HEK293 (cell line): ENCODE measurements at regions of chr16 and their contacts with region 1.

Region 1: GRCh38 chr16:67521095-67521804 is 7.4 kb upstream of the RIPOR1 start:
- H3K4me3 ChIP-seq: peak overlapping the region; percentile 38
- H3K27ac ChIP-seq: peak overlapping the region; percentile 5; the same call in 1 of the 2 replicates
- H3K4me1 ChIP-seq: no peaks in the 10 kb centered on the region
- CTCF ChIP-seq: peak; percentile 91

Region 2: DNA sequence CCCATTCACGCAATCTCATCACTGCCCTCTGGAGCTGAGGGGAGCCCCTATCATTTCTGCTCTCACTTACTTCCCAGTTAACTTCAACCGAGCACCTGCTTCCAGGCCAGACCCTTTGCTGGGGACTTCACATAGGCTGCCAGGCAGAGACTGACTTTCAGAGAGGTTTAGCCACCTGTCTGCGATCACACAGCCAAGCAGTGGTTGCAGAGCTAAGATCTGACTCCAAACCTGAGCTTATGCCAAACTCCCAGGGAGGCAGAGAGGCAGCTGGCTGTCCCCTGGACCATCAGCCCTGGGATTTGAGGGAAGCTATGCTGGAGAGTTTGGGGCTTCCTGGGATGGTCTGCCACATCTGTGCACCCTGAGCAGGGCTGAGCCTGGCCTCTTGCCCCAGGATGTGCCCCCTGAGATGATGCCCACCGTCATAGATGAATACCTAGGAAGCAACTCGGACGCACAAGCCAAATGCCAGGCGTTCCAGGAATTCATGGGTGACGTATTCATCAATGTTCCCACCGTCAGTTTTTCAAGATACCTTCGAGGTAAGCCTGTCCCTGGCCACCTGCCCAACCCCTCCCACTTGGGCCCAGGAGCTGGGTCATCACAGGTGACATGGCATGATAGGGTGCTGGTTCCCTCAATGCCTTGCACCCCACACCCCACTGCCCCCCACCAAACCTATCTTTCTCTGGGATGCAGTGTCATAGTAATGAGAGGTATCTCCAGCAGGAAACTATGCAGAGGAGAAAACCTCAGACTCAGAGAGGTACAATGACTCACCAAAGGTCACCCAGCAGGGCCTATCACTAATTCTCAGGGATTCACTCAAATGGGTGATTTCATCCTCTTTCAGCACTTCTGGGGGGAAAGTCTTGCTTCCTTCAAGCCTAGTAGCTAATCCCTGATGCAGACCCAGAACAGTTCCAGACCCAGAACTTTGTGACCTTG is 550.2 kb before region 1 on chr16:
- CTCF ChIA-PET with region 1: no interaction called
- POLR2A ChIA-PET with region 1: no interaction called
- H3K4me3 ChIP-seq: no peak overlapping the region
- H3K27ac ChIP-seq: no peak overlapping the region
- H3K4me1 ChIP-seq: no peaks in the 10 kb centered on the region
- CTCF ChIP-seq: no peak

Region 3: GRCh38 chr16:67447508-67448076 is 73.7 kb before region 1 on chr16:
- CTCF ChIA-PET with region 1: no interaction called
- POLR2A ChIA-PET with region 1: no interaction called
- H3K4me3 ChIP-seq: no peak overlapping the region
- H3K27ac ChIP-seq: no peak overlapping the region
- H3K4me1 ChIP-seq: no peaks in the 10 kb centered on the region
- CTCF ChIP-seq: no peak

Region 4: DNA sequence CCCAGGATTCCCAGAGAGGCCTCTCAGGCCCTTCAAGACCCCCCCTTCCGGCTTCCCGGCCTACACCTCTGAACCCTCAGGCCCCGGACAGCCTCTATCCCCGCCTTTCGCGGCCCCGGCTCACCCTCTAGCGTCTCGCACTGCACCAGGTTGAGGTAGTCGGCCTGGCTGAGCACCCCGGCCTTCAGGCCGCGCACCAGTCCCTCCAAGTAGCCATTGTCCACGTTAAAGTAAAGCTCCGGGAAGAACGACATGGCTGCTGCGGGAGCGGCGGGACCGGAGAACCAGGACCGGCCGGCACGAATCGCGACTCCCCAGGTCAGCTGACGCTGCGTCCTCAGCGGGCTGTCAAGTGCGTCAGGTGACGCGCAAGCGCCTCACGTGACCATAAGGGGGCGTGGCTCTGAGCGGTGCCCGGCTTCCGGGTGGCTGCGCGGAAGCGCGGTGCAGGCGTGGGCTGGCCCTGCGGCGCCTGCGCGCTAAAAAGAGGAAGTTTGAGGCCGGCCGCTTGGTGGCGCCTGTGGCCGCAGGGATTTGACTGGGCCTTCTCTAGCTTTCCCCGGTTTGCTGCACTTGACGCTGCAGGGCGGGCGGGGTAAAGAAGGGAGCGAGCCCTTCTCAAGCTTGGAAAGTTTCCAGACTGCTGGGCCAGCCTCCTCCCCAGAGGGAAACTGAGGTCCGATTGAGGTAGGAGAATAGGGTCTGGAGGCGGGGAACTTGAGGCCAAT is 40.3 kb before region 1 on chr16 and contains the start of gene ATP6V0D1:
- CTCF ChIA-PET with region 1: interaction called, 17 read pairs
- POLR2A ChIA-PET with region 1: interaction called, 7 read pairs
- H3K4me3 ChIP-seq: peak within 1 kb of the TSS; percentile 97
- H3K27ac ChIP-seq: peak within 1 kb of the TSS; percentile 18; the same call in 1 of the 2 replicates
- H3K4me1 ChIP-seq: no peaks in the 10 kb centered on the region
- CTCF ChIP-seq: peak; percentile 96

Region 5: GRCh38 chr16:67537270-67537635 is 16.0 kb after region 1 on chr16:
- CTCF ChIA-PET with region 1: interaction called, 62 read pairs
- POLR2A ChIA-PET with region 1: interaction called, 10 read pairs
- H3K4me3 ChIP-seq: peak overlapping the region; percentile 34
- H3K27ac ChIP-seq: no peak overlapping the region
- H3K4me1 ChIP-seq: no peaks in the 10 kb centered on the region; the same call in 1 of the 2 replicates
- CTCF ChIP-seq: no peak

Region 6: GRCh38 chr16:67561824-67562525 is 40.7 kb after region 1 on chr16:
- CTCF ChIA-PET with region 1: interaction called, 24 read pairs
- POLR2A ChIA-PET with region 1: interaction called, 18 read pairs
- H3K4me3 ChIP-seq: peak overlapping the region; percentile 98
- H3K27ac ChIP-seq: peak overlapping the region; percentile 100
- H3K4me1 ChIP-seq: peaks cover 9% of the 10 kb centered on the region; the same call in 1 of the 2 replicates
- CTCF ChIP-seq: no peak

Region 7: GRCh38 chr16:67652578-67653127 is 131.4 kb after region 1 on chr16:
- CTCF ChIA-PET with region 1: interaction called, 73 read pairs
- POLR2A ChIA-PET with region 1: no interaction called
- H3K4me3 ChIP-seq: peak overlapping the region; percentile 29
- H3K27ac ChIP-seq: no peak overlapping the region
- H3K4me1 ChIP-seq: peaks cover 4% of the 10 kb centered on the region; the same call in 1 of the 2 replicates
- CTCF ChIP-seq: no peak

Region 8: GRCh38 chr16:67672739-67673662 is 151.8 kb after region 1 on chr16:
- CTCF ChIA-PET with region 1: interaction called, 17 read pairs
- POLR2A ChIA-PET with region 1: no interaction called
- H3K4me3 ChIP-seq: no peak overlapping the region
- H3K27ac ChIP-seq: no peak overlapping the region
- H3K4me1 ChIP-seq: 0 out of 2 replicates have a peak, but pooled peaks cover 3% of the 10 kb centered on the region
- CTCF ChIP-seq: peak; percentile 89